CD4-positive, alpha-beta memory T cell (primary cell): ENCODE measurements at regions of chr12 and their contacts with region 1.

Region 1: GRCh38 chr12:15268927-15269552 is 47.8 kb upstream of the RERG start:
- DNase-seq: peak in 4 of 5 donors; percentile 43 to 55 (median 48)
- H3K4me3 ChIP-seq: no peak overlapping the region
- H3K4me3 Mint-ChIP-seq: no peak overlapping the region
- H3K27ac ChIP-seq: no peak overlapping the region
- H3K27ac Mint-ChIP-seq: no peak overlapping the region
- H3K4me1 ChIP-seq: no peaks in the 10 kb centered on the region
- H3K4me1 Mint-ChIP-seq: no peaks in the 10 kb centered on the region
- H3K27me3 ChIP-seq: no peaks in the 10 kb centered on the region
- H3K27me3 Mint-ChIP-seq: peaks cover 3% of the 10 kb centered on the region in 2 donors

Region 2: DNA sequence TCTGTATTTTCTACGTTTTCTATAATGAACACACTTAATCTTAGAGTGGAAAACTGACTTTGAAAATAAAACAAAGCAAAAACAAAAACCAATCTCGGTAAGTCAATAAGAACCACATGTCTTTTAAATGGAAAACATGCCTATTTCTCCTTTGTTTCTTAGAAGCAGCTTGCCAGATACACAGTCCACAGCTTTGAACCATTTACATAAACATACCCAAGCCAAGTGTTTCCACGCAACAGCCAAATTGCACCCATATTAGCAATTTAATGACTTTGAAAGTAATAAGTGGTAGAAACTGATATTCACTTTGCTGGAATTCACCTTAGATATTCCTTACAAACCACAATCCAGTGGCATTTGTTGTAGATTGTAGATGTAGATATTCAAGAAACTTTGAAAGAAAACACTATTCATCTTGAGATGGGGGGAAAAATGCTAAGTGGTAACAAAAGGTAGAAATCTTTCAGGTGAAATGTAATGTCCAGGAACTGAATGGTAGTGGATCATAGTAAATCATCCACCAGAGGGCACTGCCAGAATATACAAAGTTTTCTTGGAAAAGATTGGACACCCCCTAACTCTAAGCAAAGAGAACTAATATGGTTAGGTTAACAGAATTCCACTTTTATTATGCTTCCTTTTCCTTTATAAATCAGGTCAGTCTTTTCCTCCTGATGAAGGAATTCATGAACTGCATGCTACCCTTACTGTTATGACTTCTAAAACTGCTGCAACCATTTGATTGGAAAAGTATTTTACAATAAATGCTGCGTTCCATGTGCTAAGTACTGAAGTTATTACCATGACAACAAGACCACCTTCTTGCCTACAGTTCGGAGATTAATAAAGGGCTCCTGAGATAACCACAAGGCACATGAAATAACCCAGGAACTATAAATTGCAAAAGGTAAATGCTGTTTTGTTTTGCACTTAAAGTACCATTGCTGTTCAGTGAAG is 117.6 kb before region 1 on chr12:
- CTCF ChIA-PET with region 1: no interaction called
- POLR2A ChIA-PET with region 1: no interaction called
- intact Hi-C with region 1: loop called (anchors 1 kb)
- DNase-seq: peak in 1 of 5 donors; percentile 1
- H3K4me3 ChIP-seq: no peak overlapping the region
- H3K4me3 Mint-ChIP-seq: no peak overlapping the region
- H3K27ac ChIP-seq: no peak overlapping the region
- H3K27ac Mint-ChIP-seq: no peak overlapping the region
- H3K4me1 ChIP-seq: no peaks in the 10 kb centered on the region
- H3K4me1 Mint-ChIP-seq: no peaks in the 10 kb centered on the region
- H3K27me3 ChIP-seq: no peaks in the 10 kb centered on the region
- H3K27me3 Mint-ChIP-seq: peaks cover 5 to 13% of the 10 kb centered on the region in 2 donors